Activated B cell treated with CpG ODN at 0.5 μM for 24 hours (primary cell): ENCODE measurements at regions of chr11 and their contacts with region 1.

Region 1: GRCh38 chr11:118928108-118928870 is 2.6 kb upstream of the BCL9L start:
- DNase-seq: peak; percentile 94
- ATAC-seq: peak; percentile 52
- H3K4me3 Mint-ChIP-seq: peak overlapping the region; percentile 95
- H3K27ac Mint-ChIP-seq: peak overlapping the region; percentile 98
- H3K4me1 Mint-ChIP-seq: peaks cover 62% of the 10 kb centered on the region
- H3K27me3 Mint-ChIP-seq: peaks cover 2% of the 10 kb centered on the region
- CTCF ChIP-seq: peak; percentile 87

Region 2: DNA sequence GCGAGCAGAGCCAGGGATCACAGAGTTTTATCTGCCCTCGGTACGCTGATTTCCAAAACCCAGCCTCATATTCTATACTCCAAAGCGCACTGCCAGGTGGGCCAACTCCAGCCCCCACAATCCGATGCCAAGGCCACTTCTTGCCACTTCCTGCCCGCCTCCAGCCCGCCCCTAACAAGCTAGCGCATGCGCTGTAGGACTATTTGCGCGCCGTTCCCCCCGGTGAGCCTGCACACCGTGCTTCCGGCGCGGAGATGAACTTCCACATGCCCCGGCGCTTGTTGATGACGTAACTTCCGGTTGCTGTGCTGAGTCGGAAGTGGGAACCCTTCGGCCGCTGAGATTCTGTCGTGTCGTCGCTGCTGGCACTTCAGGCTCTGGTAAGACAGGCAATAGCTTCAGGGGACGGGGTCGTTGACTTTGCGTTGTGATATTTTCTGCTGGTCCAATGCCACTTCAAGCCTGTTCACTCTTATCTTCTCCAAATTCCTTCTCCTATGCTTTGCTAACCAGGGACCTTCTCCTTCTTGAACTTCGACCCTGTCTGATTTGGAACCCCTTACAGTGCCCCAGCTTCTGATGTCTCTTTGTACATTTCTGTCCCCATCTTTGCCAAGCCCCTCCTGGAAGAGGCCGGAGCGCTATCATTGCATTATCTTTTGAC is 568.9 kb before region 1 on chr11 and contains the start of gene UBE4A:
- CTCF ChIA-PET with region 1: no interaction called
- POLR2A ChIA-PET with region 1: no interaction called
- intact Hi-C with region 1: loop called (anchors 5 kb)
- DNase-seq: peak; percentile 93
- ATAC-seq: peak; percentile 86
- H3K4me3 Mint-ChIP-seq: peak within 1 kb of the TSS; percentile 98
- H3K27ac Mint-ChIP-seq: peak within 1 kb of the TSS; percentile 94
- H3K4me1 Mint-ChIP-seq: peaks cover 39% of the 10 kb centered on the region
- H3K27me3 Mint-ChIP-seq: no peaks in the 10 kb centered on the region
- CTCF ChIP-seq: no peak
- total RNA-seq, gene UBE4A: 28.4 and 34.2 TPM in 2 replicates

Region 3: GRCh38 chr11:118398791-118399559 is 529.3 kb before region 1 on chr11:
- CTCF ChIA-PET with region 1: no interaction called
- POLR2A ChIA-PET with region 1: no interaction called
- intact Hi-C with region 1: no loop called
- DNase-seq: no peak
- ATAC-seq: peak; percentile 28
- H3K4me3 Mint-ChIP-seq: peak overlapping the region; percentile 97
- H3K27ac Mint-ChIP-seq: peak overlapping the region; percentile 100
- H3K4me1 Mint-ChIP-seq: peaks cover 43% of the 10 kb centered on the region
- H3K27me3 Mint-ChIP-seq: no peaks in the 10 kb centered on the region
- CTCF ChIP-seq: no peak

Region 4: DNA sequence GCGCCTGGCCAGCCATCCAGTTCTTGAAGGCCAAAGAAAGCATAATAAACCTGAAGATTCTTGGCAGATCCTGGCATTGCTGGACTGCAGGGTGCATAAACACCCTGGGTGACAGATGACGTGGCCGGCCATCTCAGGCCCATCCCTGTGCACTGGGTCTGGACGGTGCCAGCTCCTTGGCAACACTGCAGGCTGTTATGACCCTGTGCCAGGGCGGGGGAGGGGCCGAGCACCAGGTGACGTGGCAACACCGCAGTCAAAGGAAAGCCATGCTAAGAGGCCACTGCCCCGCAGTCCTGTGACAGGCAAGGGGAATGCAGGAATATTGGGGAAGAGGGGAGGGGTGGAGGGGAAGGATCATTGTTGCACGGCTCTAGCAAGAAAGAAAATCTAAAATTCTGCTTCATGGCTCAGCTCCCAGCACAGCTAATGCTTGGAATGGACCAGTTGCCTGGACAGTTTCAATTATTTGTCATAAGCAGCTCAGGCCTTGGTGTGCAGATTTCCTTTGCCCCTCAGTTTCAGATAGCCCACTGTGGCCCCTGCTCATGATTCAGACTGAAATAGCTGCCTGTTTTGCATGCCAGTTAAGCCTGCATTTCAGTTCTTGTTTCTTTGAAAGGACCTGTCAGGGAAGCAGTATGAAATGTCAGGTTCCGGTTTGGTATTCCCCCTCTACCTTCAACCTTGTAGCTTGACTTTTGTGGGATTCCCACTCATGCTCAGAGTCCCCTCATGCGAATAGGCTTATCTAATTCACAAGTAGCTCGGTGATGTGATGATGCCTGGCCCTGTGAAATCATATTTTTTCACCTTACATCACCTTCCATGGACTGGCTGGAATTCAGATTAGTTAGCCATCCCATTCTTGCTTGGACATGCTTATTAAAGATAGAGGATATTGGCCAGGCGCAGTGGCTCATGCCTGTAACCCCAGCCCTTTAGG is 107.6 kb before region 1 on chr11:
- CTCF ChIA-PET with region 1: no interaction called
- POLR2A ChIA-PET with region 1: interaction called, 6 read pairs
- intact Hi-C with region 1: loop called (anchors 1 kb)
- DNase-seq: peak; percentile 51
- ATAC-seq: peak; percentile 85
- H3K4me3 Mint-ChIP-seq: peak overlapping the region; percentile 77
- H3K27ac Mint-ChIP-seq: peak overlapping the region; percentile 97
- H3K4me1 Mint-ChIP-seq: peaks cover 73% of the 10 kb centered on the region
- H3K27me3 Mint-ChIP-seq: no peaks in the 10 kb centered on the region
- CTCF ChIP-seq: no peak

Region 5: GRCh38 chr11:118907051-118908042 is 20.9 kb before region 1 on chr11:
- CTCF ChIA-PET with region 1: interaction called, 55 read pairs
- POLR2A ChIA-PET with region 1: interaction called, 109 read pairs
- intact Hi-C with region 1: loop called (anchors 1 kb)
- DNase-seq: peak; percentile 77
- ATAC-seq: peak; percentile 85
- H3K4me3 Mint-ChIP-seq: no peak overlapping the region
- H3K27ac Mint-ChIP-seq: peak overlapping the region; percentile 53
- H3K4me1 Mint-ChIP-seq: peaks cover 39% of the 10 kb centered on the region
- H3K27me3 Mint-ChIP-seq: no peaks in the 10 kb centered on the region
- CTCF ChIP-seq: peak; percentile 64

Region 6: DNA sequence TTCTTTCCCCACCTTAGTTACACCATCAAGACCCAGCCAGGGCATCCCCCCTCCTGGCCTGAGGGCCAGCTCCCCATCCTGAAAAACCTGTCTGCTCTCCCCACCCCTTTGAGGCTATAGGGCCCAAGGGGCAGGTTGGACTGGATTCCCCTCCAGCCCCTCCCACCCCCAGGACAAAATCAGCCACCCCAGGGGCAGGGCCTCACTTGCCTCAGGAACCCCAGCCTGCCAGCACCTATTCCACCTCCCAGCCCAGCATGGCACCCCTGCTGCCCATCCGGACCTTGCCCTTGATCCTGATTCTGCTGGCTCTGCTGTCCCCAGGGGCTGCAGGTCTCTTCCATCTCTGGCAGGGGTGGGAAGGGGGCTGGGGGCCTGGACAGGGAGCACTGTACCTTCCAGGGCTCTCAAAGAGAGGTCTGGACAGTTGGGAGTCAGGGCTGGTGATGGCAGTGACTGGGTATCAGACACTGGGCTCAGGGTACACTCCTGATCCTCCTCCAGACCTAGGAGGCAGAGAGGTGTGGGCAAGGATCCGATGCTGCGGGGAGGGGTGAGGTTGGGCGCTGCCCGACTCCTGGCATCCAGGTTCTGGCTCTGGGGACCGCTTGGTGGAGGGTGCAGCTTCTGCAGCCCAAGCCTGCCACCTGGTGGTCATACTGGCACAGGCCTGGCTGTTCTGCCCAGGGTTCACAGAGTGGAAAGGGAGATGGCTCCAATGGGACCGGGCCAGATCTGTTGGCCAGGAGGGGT is 28.0 kb after region 1 on chr11 and contains the start of gene UPK2:
- CTCF ChIA-PET with region 1: interaction called, 11 read pairs
- POLR2A ChIA-PET with region 1: interaction called, 5 read pairs
- intact Hi-C with region 1: loop called (anchors 1 kb)
- DNase-seq: peak; percentile 81
- ATAC-seq: peak; percentile 99
- H3K4me3 Mint-ChIP-seq: no peak within 1 kb of the TSS
- H3K27ac Mint-ChIP-seq: no peak within 1 kb of the TSS
- H3K4me1 Mint-ChIP-seq: peaks cover 3% of the 10 kb centered on the region
- H3K27me3 Mint-ChIP-seq: peaks cover 26% of the 10 kb centered on the region
- CTCF ChIP-seq: peak; percentile 62
- total RNA-seq, gene UPK2: 0.27 TPM in 1 of 2 replicates, not detected in the other

Region 7: GRCh38 chr11:119030329-119031049 is 102.2 kb after region 1 on chr11 and contains the start of gene SLC37A4:
- CTCF ChIA-PET with region 1: no interaction called
- POLR2A ChIA-PET with region 1: no interaction called
- intact Hi-C with region 1: loop called (anchors 1 kb)
- DNase-seq: peak; percentile 99
- ATAC-seq: peak; percentile 95
- H3K4me3 Mint-ChIP-seq: peak within 1 kb of the TSS; percentile 85
- H3K27ac Mint-ChIP-seq: peak within 1 kb of the TSS; percentile 61
- H3K4me1 Mint-ChIP-seq: peaks cover 15% of the 10 kb centered on the region
- H3K27me3 Mint-ChIP-seq: no peaks in the 10 kb centered on the region
- CTCF ChIP-seq: no peak
- total RNA-seq, gene SLC37A4: 12.0 and 12.1 TPM in 2 replicates